Adrenal gland (tissue), 19 donors: ENCODE measurements at regions of chr1 and their contacts with region 1.

Region 1: GRCh38 chr1:10494754-10495474 is 20.2 kb downstream of the PEX14 start:
- DNase-seq: peak; percentile 60 to 92 (median 80)
- H3K4me3 ChIP-seq: peak overlapping the region in 1 of 4 donors; percentile 50
- H3K27ac ChIP-seq: peak overlapping the region in 2 of 5 donors; percentile 3 to 38
- H3K4me1 ChIP-seq: peaks cover 5 to 20% of the 10 kb centered on the region in 2 donors
- H3K27me3 ChIP-seq: no peaks in the 10 kb centered on the region
- CTCF ChIP-seq: peak; percentile 82 to 97 (median 92)
- POLR2A ChIP-seq: no peak

Region 2: DNA sequence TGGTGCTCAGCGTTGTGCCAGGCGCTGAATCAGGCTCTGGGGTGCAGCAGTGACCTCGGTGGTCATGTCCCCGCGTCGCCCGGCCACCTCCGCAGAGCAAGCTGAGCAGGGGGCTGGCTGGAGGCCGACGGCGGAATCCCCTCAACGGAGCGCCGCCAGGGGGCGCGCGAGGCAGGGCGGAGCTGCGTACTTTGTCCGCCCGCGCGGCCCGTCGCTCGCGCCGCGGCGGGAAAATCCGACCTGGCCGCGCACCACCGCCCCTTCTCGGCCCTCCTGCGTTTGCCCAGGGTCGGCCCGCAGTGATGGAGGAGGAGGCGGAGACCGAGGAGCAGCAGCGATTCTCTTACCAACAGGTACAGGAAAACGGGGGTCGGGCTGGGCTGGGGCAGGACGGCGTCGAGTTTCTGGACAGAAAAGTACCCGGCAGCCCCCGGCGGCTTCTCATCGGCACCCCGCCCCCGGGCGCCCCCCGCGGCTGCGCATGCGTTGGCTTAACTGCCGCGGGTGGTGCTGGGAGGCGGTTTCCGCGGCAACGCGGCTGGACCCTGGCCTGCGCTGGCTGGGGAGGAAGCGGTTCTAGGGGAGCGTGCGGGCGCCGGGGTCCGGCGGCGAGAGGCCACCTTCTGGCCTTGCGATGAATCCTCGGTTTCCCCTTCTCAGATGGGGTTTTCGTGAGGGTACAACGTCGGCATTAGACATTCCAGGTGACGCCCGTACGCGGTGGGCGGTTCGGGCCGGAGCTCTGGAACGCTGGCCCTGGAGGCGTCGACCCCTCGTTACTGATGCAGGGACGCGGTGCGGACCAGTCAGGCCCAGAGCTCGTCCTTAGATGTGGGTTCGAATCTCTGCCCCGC is 64.5 kb before region 1 on chr1 and contains the start of gene CENPS:
- intact Hi-C with region 1: loop called (anchors 5 kb)
- DNase-seq: peak; percentile 83 to 95 (median 90)
- H3K4me3 ChIP-seq: peak within 1 kb of the TSS; percentile 15 to 70 (median 68)
- H3K27ac ChIP-seq: peak within 1 kb of the TSS in 2 of 5 donors; percentile 39 to 79
- H3K4me1 ChIP-seq: peaks cover 9 to 20% of the 10 kb centered on the region in 2 donors
- H3K27me3 ChIP-seq: no peaks in the 10 kb centered on the region
- CTCF ChIP-seq: peak; percentile 75 to 99 (median 94)
- POLR2A ChIP-seq: no peak
- total RNA-seq, gene CENPS: 10.0 to 32.9 (median 16.3) TPM